CD8-positive, alpha-beta T cell (primary cell): ENCODE measurements at regions of chr20 and their contacts with region 1.

Region 1: GRCh38 chr20:37992802-37993409 is 40.4 kb downstream of the TTI1 start:
- DNase-seq: peak in 4 of 9 experiments; percentile 13 to 60 (median 32)
- ATAC-seq: no peak
- H3K4me3 ChIP-seq: no peak overlapping the region
- H3K4me3 Mint-ChIP-seq: no peak overlapping the region
- H3K27ac ChIP-seq: no peak overlapping the region
- H3K27ac Mint-ChIP-seq: no peak overlapping the region
- H3K4me1 ChIP-seq: no peaks in the 10 kb centered on the region
- H3K4me1 Mint-ChIP-seq: peaks cover 22% of the 10 kb centered on the region
- H3K27me3 ChIP-seq: no peaks in the 10 kb centered on the region
- H3K27me3 Mint-ChIP-seq: no peaks in the 10 kb centered on the region
- CTCF ChIP-seq: peak; percentile 51

Region 2: GRCh38 chr20:37564388-37565133 is 428.3 kb before region 1 on chr20:
- CTCF ChIA-PET with region 1: interaction called, 8 read pairs
- POLR2A ChIA-PET with region 1: no interaction called
- intact Hi-C with region 1: loop called in 1 of 2 experiments (anchors 1 kb)
- DNase-seq: peak in 5 of 9 experiments; percentile 21 to 50 (median 40)
- ATAC-seq: no peak
- H3K4me3 ChIP-seq: no peak overlapping the region
- H3K4me3 Mint-ChIP-seq: no peak overlapping the region
- H3K27ac ChIP-seq: no peak overlapping the region
- H3K27ac Mint-ChIP-seq: no peak overlapping the region
- H3K4me1 ChIP-seq: no peaks in the 10 kb centered on the region
- H3K4me1 Mint-ChIP-seq: peaks cover 4% of the 10 kb centered on the region
- H3K27me3 ChIP-seq: peaks cover 11 to 14% of the 10 kb centered on the region in 2 experiments
- H3K27me3 Mint-ChIP-seq: peaks cover 42% of the 10 kb centered on the region
- CTCF ChIP-seq: peak; percentile 84

Region 3: DNA sequence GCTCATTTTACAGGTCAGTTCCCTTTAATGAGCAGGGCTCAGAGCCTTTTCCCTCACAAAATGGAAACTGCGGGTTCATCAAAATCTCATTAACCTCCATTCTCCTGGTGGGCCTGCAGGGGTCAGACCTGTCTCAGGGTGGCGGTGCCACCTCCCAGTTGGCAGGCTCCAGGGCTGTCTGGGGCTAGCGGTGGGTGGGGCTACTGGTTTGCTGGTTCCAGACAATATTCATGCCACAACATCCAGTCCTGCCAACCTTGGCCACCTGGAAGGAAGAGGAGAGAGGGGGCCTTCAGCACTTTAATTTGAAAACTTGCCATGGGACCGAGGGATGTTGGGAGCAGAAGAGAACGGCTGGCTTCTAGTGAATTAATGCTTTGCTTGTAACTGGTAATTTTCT is 341.0 kb before region 1 on chr20:
- CTCF ChIA-PET with region 1: interaction called, 3 read pairs
- POLR2A ChIA-PET with region 1: no interaction called
- intact Hi-C with region 1: loop called in 1 of 2 experiments (anchors 2 kb)
- DNase-seq: peak in 2 of 9 experiments; percentile 26 to 39
- ATAC-seq: no peak
- H3K4me3 ChIP-seq: no peak overlapping the region
- H3K4me3 Mint-ChIP-seq: no peak overlapping the region
- H3K27ac ChIP-seq: no peak overlapping the region
- H3K27ac Mint-ChIP-seq: no peak overlapping the region
- H3K4me1 ChIP-seq: no peaks in the 10 kb centered on the region
- H3K4me1 Mint-ChIP-seq: no peaks in the 10 kb centered on the region
- H3K27me3 ChIP-seq: no peaks in the 10 kb centered on the region
- H3K27me3 Mint-ChIP-seq: peaks cover 12% of the 10 kb centered on the region
- CTCF ChIP-seq: no peak

Region 4: GRCh38 chr20:37901654-37902503 is 91.0 kb before region 1 on chr20:
- CTCF ChIA-PET with region 1: interaction called, 3 read pairs
- POLR2A ChIA-PET with region 1: no interaction called
- intact Hi-C with region 1: loop called in 1 of 2 experiments (anchors 2 kb)
- DNase-seq: peak in 2 of 9 experiments; percentile 29 to 45
- ATAC-seq: peak; percentile 40
- H3K4me3 ChIP-seq: no peak overlapping the region
- H3K4me3 Mint-ChIP-seq: peak overlapping the region; percentile 42
- H3K27ac ChIP-seq: no peak overlapping the region
- H3K27ac Mint-ChIP-seq: peak overlapping the region; percentile 52
- H3K4me1 ChIP-seq: no peaks in the 10 kb centered on the region
- H3K4me1 Mint-ChIP-seq: peaks cover 13% of the 10 kb centered on the region
- H3K27me3 ChIP-seq: peaks cover 8 to 14% of the 10 kb centered on the region in 2 experiments
- H3K27me3 Mint-ChIP-seq: peaks cover 54% of the 10 kb centered on the region
- CTCF ChIP-seq: no peak

Region 5: DNA sequence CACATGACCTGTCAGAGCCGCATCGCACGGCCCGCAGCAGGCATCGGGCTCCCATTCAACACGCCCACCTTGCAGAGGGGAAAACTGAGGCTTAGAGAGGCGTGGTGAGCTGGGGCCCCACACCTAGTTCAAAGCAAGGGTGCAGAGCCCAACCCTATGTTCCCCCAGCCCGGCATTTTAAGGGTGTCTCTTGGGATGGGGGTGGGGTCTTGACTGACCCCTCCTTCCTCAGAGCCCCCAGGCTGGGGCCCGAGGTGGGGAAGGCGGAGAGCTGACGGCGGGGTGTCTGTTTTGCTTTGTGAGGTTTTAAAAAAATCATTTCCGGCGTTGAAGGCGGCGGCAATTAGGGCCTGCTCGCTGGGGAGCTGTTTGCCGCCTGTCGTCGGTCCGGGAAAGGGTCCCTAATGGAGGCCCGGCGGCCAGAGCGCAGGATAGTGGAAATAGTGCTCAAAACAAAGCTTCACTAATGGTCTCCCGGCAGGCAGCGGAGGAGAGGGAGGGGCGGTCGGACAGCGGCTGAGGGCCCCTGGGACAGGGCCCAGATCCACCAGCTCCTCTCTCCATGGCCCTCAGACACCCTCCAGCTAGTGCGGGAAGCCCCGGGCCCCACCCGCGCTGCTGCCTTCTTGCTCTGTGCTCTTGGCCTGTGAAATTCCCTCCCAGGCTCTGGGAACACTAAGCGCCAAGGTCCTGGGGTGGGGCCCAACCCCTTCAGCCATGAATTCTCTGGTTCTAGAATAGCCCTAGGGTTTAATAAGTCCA is 78.1 kb before region 1 on chr20:
- CTCF ChIA-PET with region 1: no interaction called
- POLR2A ChIA-PET with region 1: no interaction called
- intact Hi-C with region 1: no loop called
- DNase-seq: peak in 7 of 9 experiments; percentile 7 to 64 (median 31)
- ATAC-seq: peak; percentile 54
- H3K4me3 ChIP-seq: peak overlapping the region; percentile 13 to 17
- H3K4me3 Mint-ChIP-seq: peak overlapping the region; percentile 32
- H3K27ac ChIP-seq: no peak overlapping the region
- H3K27ac Mint-ChIP-seq: no peak overlapping the region
- H3K4me1 ChIP-seq: peaks cover 8% of the 10 kb centered on the region
- H3K4me1 Mint-ChIP-seq: peaks cover 18% of the 10 kb centered on the region
- H3K27me3 ChIP-seq: peaks cover 0 to 3% of the 10 kb centered on the region in 2 experiments
- H3K27me3 Mint-ChIP-seq: peaks cover 37% of the 10 kb centered on the region
- CTCF ChIP-seq: no peak